ENCODE measurements at regions of chr1 and their contacts with region 1.

Region 1: DNA sequence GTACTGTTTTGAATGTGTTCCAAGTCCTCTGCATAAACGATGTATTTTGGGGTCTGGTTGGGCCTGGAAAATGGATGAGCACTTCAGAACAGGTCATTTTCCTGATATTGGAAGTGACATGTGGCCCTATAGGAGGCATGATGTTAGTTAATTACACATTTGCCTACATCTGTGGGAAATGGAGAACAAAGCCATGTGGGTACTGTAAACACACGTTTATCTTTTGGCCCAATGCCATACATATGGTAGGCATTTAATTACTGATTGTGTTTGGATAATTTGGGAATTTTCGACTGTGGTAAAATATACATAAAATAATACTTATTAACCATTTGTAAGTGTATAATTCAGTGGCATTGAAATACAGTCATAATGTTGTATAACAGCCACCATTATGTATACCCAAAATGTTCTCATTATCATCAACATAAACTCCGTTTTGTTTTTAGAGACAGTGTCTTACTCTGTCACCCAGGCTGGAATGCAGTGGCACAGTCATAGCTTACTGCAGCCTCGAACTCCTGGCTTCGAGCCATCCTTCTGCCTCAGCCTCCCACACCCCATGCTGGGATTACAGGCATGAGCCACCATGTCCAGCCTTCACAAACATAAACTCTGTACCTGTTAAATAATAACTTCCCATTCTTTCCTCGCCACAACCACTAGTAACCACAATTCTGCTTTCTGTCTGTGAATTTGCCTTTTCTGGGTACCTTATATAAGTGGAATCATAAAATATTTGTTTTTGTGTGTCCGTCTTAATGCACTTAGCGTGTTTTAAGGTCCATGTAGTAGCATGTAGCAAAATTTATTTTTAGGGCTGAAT is 11.9 kb upstream of the RNPEP start:
- DNase-seq: no peak
- H3K4me3 Mint-ChIP-seq: no peak overlapping the region
- H3K27ac Mint-ChIP-seq: no peak overlapping the region
- H3K4me1 Mint-ChIP-seq: peaks cover 2% of the 10 kb centered on the region
- H3K27me3 Mint-ChIP-seq: peaks cover 11% of the 10 kb centered on the region

Region 2: DNA sequence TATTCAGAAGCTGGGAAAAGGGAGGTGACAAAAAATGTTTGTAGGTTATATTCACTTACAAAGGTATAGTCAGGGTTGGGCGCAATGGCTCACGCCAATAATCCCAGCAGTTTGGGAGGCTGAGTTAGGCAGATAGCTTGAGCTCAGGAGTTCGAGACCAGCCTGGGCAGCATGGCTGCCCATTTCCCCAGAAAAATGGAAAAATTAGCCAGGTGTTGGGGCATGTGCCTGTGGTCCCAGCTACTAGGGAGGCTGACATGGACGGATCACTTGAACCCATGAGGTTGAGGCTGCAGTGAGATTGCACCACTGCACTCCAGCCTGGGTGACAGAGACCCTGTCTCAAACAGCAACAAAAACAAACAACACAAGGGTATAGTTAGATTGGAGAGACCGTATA is 12.2 kb before region 1 on chr1:
- CTCF ChIA-PET with region 1: interaction called, 15 read pairs
- POLR2A ChIA-PET with region 1: no interaction called
- DNase-seq: no peak
- H3K4me3 Mint-ChIP-seq: no peak overlapping the region
- H3K27ac Mint-ChIP-seq: no peak overlapping the region
- H3K4me1 Mint-ChIP-seq: peaks cover 22% of the 10 kb centered on the region
- H3K27me3 Mint-ChIP-seq: no peaks in the 10 kb centered on the region

Region 3: GRCh38 chr1:201999625-202000238 is 29.2 kb after region 1 on chr1:
- CTCF ChIA-PET with region 1: no interaction called
- POLR2A ChIA-PET with region 1: no interaction called
- DNase-seq: peak; percentile 32
- H3K4me3 Mint-ChIP-seq: no peak overlapping the region
- H3K27ac Mint-ChIP-seq: no peak overlapping the region
- H3K4me1 Mint-ChIP-seq: no peaks in the 10 kb centered on the region
- H3K27me3 Mint-ChIP-seq: no peaks in the 10 kb centered on the region

Measured in activated CD4-positive, alpha-beta T cell treated with anti-CD3 and anti-CD28 coated beads, Interleukin-2, amount 10 ng/mL, durations not matched to agents 7 days and 5 days (primary cell).